ENCODE measurements at regions of chr15 and their contacts with region 1.

Region 1: DNA sequence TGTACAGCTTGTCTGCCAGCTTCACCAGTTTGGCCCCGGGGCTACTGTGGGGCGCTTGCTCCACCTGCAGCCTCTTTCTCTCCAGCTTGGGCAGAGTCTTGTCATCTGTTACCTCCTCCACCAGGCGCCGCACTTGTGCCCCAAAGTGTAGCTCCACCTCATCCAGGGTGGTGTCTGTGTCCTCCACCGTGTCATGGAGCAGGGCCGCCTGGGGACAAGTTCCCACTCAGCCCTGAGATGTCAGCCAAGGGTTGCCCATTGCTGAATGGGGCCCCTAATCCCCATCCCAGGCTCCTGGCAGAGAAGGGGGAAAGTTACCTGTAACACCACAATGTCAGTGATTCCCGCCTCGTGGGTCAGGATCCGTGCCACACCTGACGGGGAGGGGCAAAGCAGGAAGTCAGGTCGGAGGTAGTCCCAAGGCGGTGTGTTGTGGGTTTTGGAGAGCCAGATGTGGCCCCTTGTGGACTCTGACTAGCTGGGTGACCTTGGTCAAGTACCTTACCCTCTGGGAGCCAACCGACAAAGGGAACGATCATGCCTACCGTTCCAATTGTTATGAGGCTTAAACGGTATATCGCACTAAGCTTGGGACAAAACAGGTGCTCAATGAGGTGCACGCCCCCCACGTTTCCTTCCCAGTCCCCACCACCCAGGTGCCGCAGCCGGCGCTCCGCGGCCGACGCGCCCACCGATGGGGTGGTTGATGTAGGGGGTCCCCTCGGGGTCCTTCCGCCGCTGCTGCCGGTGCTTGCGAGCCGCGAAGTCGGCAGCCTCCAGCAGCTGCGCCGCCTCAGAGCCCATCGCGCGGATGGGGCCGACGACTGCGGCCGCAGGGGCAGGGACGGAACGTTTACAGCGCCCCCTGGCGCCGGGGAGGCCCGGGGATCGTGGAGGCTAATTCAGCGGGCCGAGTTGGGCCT is at the start of gene HDDC3:
- DNase-seq: peak; percentile 92 to 94
- H3K4me3 ChIP-seq: peak within 1 kb of the TSS; percentile 71
- H3K4me3 Mint-ChIP-seq: peak within 1 kb of the TSS; percentile 96
- H3K27ac Mint-ChIP-seq: peak within 1 kb of the TSS; percentile 93
- H3K4me1 ChIP-seq: peaks cover 16% of the 10 kb centered on the region
- H3K4me1 Mint-ChIP-seq: peaks cover 22% of the 10 kb centered on the region
- H3K27me3 ChIP-seq: no peaks in the 10 kb centered on the region; the same call in 1 of the 2 replicates
- H3K27me3 Mint-ChIP-seq: no peaks in the 10 kb centered on the region
- CTCF ChIP-seq: peak; percentile 75 to 93
- total RNA-seq, gene HDDC3: 20.0 and 21.6 TPM in 2 replicates

Region 2: GRCh38 chr15:90648137-90649070 is 283.6 kb before region 1 on chr15:
- CTCF ChIA-PET with region 1: interaction called, 10 read pairs
- POLR2A ChIA-PET with region 1: no interaction called
- intact Hi-C with region 1: loop called (anchors 1 kb)
- DNase-seq: peak; percentile 63 to 64
- H3K4me3 ChIP-seq: no peak overlapping the region
- H3K4me3 Mint-ChIP-seq: peak overlapping the region; percentile 52
- H3K27ac Mint-ChIP-seq: peak overlapping the region; percentile 86
- H3K4me1 ChIP-seq: peaks cover 13% of the 10 kb centered on the region
- H3K4me1 Mint-ChIP-seq: peaks cover 10% of the 10 kb centered on the region
- H3K27me3 ChIP-seq: no peaks in the 10 kb centered on the region
- H3K27me3 Mint-ChIP-seq: no peaks in the 10 kb centered on the region
- CTCF ChIP-seq: peak; percentile 86 to 90

Region 3: DNA sequence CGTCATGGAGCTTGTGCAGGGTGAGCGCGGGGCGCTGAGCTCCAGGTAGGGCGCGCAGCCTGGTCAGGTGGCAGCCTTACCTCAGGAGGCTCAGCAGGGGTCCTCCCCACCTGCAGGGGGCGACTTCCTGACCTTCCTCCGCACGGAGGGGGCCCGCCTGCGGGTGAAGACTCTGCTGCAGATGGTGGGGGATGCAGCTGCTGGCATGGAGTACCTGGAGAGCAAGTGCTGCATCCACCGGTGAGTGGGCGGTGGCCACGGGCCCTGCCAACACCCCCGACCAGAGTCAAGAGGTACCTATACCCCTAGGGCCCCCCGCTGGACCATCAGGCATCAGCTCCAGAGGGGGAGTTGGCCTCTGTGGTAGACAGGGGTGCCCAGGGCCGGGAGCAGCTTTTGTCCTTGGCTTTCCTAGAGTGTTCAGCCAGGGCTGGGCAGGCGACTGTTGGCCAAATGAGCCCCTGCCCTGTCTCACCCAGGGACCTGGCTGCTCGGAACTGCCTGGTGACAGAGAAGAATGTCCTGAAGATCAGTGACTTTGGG is 38.8 kb before region 1 on chr15:
- CTCF ChIA-PET with region 1: interaction called, 10 read pairs
- POLR2A ChIA-PET with region 1: no interaction called
- intact Hi-C with region 1: no loop called
- DNase-seq: peak in 1 of 2 experiments; percentile 43
- H3K4me3 ChIP-seq: no peak overlapping the region
- H3K4me3 Mint-ChIP-seq: peak overlapping the region; percentile 32
- H3K27ac Mint-ChIP-seq: no peak overlapping the region
- H3K4me1 ChIP-seq: no peaks in the 10 kb centered on the region
- H3K4me1 Mint-ChIP-seq: no peaks in the 10 kb centered on the region
- H3K27me3 ChIP-seq: no peaks in the 10 kb centered on the region
- H3K27me3 Mint-ChIP-seq: no peaks in the 10 kb centered on the region
- CTCF ChIP-seq: peak; percentile 9 to 32

Region 4: DNA sequence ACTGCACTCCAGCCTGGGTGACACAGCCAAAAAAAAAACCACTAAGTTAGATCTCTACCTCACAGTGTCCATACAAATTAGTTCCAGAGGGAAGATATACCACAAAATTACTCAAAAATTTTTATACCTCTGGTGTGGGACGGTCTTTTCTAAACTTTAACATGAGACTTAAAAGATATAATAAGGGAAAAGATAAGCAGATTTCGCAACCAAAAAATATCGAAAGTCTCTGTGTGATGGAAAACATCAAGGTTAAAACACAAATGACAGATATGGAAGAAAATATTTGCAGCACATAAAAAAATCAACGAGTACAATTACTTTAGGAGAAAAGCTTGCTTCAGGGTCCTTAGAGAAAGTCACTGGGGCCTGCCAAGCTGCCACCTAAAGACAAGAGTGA is 10.1 kb before region 1 on chr15:
- CTCF ChIA-PET with region 1: interaction called, 10 read pairs
- POLR2A ChIA-PET with region 1: no interaction called
- intact Hi-C with region 1: no loop called
- DNase-seq: no peak
- H3K4me3 ChIP-seq: no peak overlapping the region
- H3K4me3 Mint-ChIP-seq: no peak overlapping the region
- H3K27ac Mint-ChIP-seq: no peak overlapping the region
- H3K4me1 ChIP-seq: no peaks in the 10 kb centered on the region
- H3K4me1 Mint-ChIP-seq: no peaks in the 10 kb centered on the region
- H3K27me3 ChIP-seq: no peaks in the 10 kb centered on the region
- H3K27me3 Mint-ChIP-seq: no peaks in the 10 kb centered on the region
- CTCF ChIP-seq: no peak

Region 5: GRCh38 chr15:91032919-91033803 is 101.2 kb after region 1 on chr15:
- CTCF ChIA-PET with region 1: interaction called, 29 read pairs
- POLR2A ChIA-PET with region 1: no interaction called
- intact Hi-C with region 1: no loop called
- DNase-seq: peak; percentile 91 to 92
- H3K4me3 ChIP-seq: no peak overlapping the region
- H3K4me3 Mint-ChIP-seq: no peak overlapping the region
- H3K27ac Mint-ChIP-seq: no peak overlapping the region
- H3K4me1 ChIP-seq: no peaks in the 10 kb centered on the region
- H3K4me1 Mint-ChIP-seq: peaks cover 7% of the 10 kb centered on the region
- H3K27me3 ChIP-seq: no peaks in the 10 kb centered on the region
- H3K27me3 Mint-ChIP-seq: peaks cover 17% of the 10 kb centered on the region
- CTCF ChIP-seq: peak; percentile 83 to 84

Region 6: GRCh38 chr15:91055548-91056331 is 123.7 kb after region 1 on chr15:
- CTCF ChIA-PET with region 1: no interaction called
- POLR2A ChIA-PET with region 1: no interaction called
- intact Hi-C with region 1: no loop called
- DNase-seq: peak; percentile 62 to 63
- H3K4me3 ChIP-seq: no peak overlapping the region
- H3K4me3 Mint-ChIP-seq: no peak overlapping the region
- H3K27ac Mint-ChIP-seq: no peak overlapping the region
- H3K4me1 ChIP-seq: no peaks in the 10 kb centered on the region
- H3K4me1 Mint-ChIP-seq: no peaks in the 10 kb centered on the region
- H3K27me3 ChIP-seq: no peaks in the 10 kb centered on the region
- H3K27me3 Mint-ChIP-seq: peaks cover 36% of the 10 kb centered on the region
- CTCF ChIP-seq: peak; percentile 63 to 66

Region 7: DNA sequence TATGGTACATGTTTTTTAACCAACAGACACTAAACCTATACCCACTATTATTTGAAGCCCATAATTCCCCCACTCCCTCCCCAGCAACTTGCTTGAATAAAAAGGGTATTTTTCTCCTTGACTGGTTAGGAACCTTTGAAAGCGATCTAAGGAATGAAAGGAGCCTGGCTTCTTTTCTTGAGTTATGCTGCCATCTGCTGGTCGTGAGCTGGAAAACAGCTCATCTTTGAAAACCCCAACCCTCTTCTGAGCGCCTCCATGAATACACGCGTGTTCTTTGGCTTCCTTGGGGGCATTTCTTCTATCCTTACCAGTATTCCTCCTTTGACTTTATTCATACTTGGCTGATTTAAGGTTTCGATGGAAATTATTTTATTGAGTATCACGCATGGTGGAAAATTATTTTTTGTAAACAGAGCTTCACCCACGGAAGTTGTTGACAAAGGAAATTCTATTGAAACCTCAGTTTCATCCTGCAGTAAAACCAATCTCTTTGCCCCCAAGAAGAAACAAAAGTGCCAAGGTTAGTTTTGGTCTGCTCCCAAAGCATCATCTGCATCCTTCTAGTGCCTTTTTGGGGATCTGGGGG is 339.7 kb after region 1 on chr15:
- CTCF ChIA-PET with region 1: interaction called, 11 read pairs
- POLR2A ChIA-PET with region 1: no interaction called
- intact Hi-C with region 1: loop called (anchors 10 kb)
- DNase-seq: peak in 1 of 2 experiments; percentile 59
- H3K4me3 ChIP-seq: no peak overlapping the region
- H3K4me3 Mint-ChIP-seq: no peak overlapping the region
- H3K27ac Mint-ChIP-seq: no peak overlapping the region
- H3K4me1 ChIP-seq: no peaks in the 10 kb centered on the region
- H3K4me1 Mint-ChIP-seq: no peaks in the 10 kb centered on the region
- H3K27me3 ChIP-seq: no peaks in the 10 kb centered on the region
- H3K27me3 Mint-ChIP-seq: peaks cover 10% of the 10 kb centered on the region
- CTCF ChIP-seq: peak; percentile 67 to 79

Measured in Caco-2 (cell line).